Ascending aorta (tissue), 2 donors: ENCODE measurements at regions of chr9 and their contacts with region 1.

Region 1: GRCh38 chr9:130794923-130795495 is 40.0 kb upstream of the ABL1 start:
- DNase-seq: no peak
- H3K4me3 ChIP-seq: no peak overlapping the region
- H3K27ac ChIP-seq: peak overlapping the region; percentile 8 to 55
- H3K4me1 ChIP-seq: peaks cover 0 to 12% of the 10 kb centered on the region in 2 donors
- H3K27me3 ChIP-seq: no peaks in the 10 kb centered on the region
- CTCF ChIP-seq: no peak

Region 2: GRCh38 chr9:130732131-130732530 is 62.9 kb before region 1 on chr9:
- intact Hi-C with region 1: no loop called
- DNase-seq: no peak
- H3K4me3 ChIP-seq: no peak overlapping the region
- H3K27ac ChIP-seq: no peak overlapping the region
- H3K4me1 ChIP-seq: no peaks in the 10 kb centered on the region
- H3K27me3 ChIP-seq: no peaks in the 10 kb centered on the region
- CTCF ChIP-seq: no peak

Region 3: DNA sequence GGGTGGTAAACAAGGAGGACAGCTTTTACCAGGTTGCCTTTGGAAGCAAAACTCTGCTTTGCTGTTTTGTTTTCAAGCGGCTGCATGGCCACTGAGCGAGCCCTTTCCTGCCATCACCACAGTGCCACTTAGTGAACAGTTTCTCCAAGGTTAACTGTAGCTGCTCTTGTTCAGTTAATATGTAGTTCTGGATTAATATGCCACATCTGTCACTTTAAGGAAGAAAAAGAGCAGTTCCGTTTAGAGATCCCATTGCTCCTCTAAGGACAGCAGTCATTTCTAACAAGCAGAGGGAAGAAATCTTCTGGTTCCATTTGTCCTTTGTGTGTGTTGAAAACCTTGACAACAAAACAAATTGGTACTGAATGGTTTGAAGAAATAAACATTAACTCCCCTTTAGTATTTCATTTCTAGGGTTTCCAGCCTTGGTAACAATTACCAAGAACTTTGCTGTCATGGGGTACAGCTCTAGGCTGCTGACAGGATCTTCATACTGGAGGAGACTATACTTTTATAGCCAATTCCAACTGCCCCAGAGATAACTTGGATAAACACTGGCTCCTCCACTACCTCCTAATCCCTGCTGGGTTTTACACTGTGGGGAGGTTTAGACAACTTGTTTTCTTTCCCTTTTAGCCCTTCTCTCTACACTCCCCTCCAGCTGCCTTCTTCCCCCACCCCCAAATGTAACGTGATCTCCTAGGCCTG is 29.8 kb after region 1 on chr9:
- intact Hi-C with region 1: loop called (anchors 2 kb)
- DNase-seq: no peak
- H3K4me3 ChIP-seq: peak overlapping the region in 1 of 2 donors; percentile 35
- H3K27ac ChIP-seq: peak overlapping the region; percentile 76 to 87
- H3K4me1 ChIP-seq: peaks cover 0 to 20% of the 10 kb centered on the region in 2 donors
- H3K27me3 ChIP-seq: no peaks in the 10 kb centered on the region
- CTCF ChIP-seq: no peak

Region 4: DNA sequence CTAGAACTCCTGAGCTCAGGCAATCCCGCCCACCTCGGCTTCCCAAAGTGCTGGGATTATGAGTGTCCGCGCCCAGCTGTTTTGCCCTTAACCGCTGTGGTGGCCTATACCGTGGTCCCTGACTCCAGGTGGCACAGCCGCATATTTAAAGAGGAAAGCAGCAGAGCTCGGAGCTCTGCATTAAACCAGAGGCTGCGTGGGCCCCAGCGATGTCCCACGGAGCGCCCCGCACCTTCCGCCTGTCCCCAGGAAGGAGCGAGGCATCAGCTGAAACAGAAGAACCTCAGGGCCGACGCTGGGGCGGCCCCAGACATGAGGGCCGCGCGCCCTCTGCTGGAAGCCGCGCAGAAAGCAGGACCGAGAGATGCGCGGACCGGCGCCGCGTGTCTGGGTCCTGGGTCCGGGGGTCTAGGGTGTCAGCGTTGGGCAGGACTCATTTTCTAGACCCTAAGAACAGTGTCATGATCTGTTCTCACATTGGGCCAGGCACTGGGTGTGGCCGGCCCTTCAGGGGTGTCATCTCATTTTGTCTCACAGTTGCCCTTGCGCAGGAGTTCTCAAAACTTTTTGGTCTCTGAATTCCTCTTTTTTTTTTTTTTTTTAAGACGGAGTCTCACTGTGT is 251.7 kb after region 1 on chr9:
- intact Hi-C with region 1: no loop called
- DNase-seq: peak in 1 of 2 donors; percentile 75
- H3K4me3 ChIP-seq: peak overlapping the region; percentile 3 to 43
- H3K27ac ChIP-seq: no peak overlapping the region
- H3K4me1 ChIP-seq: no peaks in the 10 kb centered on the region
- H3K27me3 ChIP-seq: no peaks in the 10 kb centered on the region
- CTCF ChIP-seq: peak; percentile 93 to 98 (median 96)